ENCODE measurements at regions of chr9 and their contacts with region 1.

Region 1: DNA sequence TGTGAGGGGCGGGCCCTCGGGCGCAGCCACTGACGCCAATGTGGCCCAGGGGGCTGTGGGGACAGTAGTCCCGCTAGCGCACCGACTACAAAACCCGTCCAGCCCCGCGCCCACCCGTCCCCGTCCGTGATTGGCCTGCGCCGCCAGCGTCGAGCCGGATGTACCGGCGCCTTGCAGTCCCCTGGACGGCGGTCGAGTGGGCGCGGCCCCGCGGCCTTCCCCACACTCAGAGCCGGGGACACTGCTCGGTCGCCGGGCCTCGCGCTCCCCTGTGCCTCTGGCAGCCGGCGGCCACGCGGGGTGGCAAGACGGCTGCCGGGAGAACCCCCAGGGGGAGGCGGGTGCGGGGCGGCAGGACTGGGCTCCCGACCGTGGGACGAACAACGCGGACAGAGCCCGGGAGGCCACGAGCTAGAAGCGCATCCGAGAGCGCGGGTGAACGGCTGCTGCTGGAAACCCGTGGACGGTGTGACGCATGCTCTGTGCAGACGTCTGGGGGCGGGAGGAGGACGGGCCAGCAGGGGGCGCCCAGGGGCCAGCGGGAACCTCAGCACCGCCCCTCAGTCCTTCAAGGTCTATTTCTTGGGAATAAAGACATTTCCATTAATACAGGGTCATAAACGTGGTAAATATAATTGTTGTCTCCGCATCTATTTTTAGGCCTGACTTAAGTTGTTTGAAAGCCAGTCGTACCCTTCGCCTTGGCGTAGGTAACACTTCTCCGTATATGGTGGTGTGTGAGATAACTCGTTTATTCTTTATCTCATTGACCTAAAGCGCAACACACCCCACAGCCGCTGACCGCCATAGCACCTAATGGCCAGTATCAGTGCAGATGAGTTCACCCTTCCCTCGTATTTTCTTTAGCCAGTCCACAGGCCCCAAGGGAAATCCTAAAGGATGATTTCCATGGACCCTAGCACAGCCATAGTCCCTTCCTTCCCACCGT is 629 bp upstream of the BICD2 start:
- DNase-seq: peak; percentile 98 to 99
- H3K4me3 ChIP-seq: peak overlapping the region; percentile 71 to 79
- H3K27ac ChIP-seq: peak overlapping the region; percentile 95
- H3K4me1 ChIP-seq: peaks cover 0 to 44% (median 38%) of the 10 kb centered on the region in 4 donors
- H3K27me3 ChIP-seq: no peaks in the 10 kb centered on the region
- CTCF ChIP-seq: peak; percentile 90 to 93

Region 2: GRCh38 chr9:92115071-92115858 is 650.0 kb before region 1 on chr9 and contains the start of gene SPTLC1:
- intact Hi-C with region 1: loop called (anchors 10 kb)
- DNase-seq: peak; percentile 94 to 97
- H3K4me3 ChIP-seq: peak within 1 kb of the TSS; percentile 82 to 90
- H3K27ac ChIP-seq: peak within 1 kb of the TSS; percentile 84 to 87
- H3K4me1 ChIP-seq: peaks cover 0 to 17% (median 14%) of the 10 kb centered on the region in 4 donors
- H3K27me3 ChIP-seq: no peaks in the 10 kb centered on the region
- CTCF ChIP-seq: no peak

Region 3: GRCh38 chr9:92669890-92670708 is 95.2 kb before region 1 on chr9 and contains the start of gene IPPK:
- intact Hi-C with region 1: loop called (anchors 2 kb)
- DNase-seq: peak; percentile 98 to 99
- H3K4me3 ChIP-seq: peak within 1 kb of the TSS; percentile 91
- H3K27ac ChIP-seq: peak within 1 kb of the TSS; percentile 86 to 90
- H3K4me1 ChIP-seq: peaks cover 0 to 46% (median 19%) of the 10 kb centered on the region in 4 donors
- H3K27me3 ChIP-seq: no peaks in the 10 kb centered on the region
- CTCF ChIP-seq: peak in 1 of 2 experiments; percentile 19

Measured in tibial artery (tissue), 4 donors.